ENCODE measurements at regions of chr19 and their contacts with region 1.

Region 1: GRCh38 chr19:32971715-32972540 is at the starts of genes CEP89 and FAAP24:
- DNase-seq: peak; percentile 97 to 98 (median 98)
- ATAC-seq: peak; percentile 99 to 100
- H3K4me3 ChIP-seq: peak within 1 kb of the TSS; percentile 88
- H3K27ac ChIP-seq: peak within 1 kb of the TSS; percentile 10
- H3K4me1 ChIP-seq: peaks cover 4% of the 10 kb centered on the region
- H3K27me3 ChIP-seq: no peaks in the 10 kb centered on the region
- total RNA-seq, gene CEP89: 9.2 to 11.3 (median 9.3) TPM
- total RNA-seq, gene FAAP24: 0.66 to 0.97 (median 0.79) TPM in 3 of 4 donors, not detected in the other

Region 2: DNA sequence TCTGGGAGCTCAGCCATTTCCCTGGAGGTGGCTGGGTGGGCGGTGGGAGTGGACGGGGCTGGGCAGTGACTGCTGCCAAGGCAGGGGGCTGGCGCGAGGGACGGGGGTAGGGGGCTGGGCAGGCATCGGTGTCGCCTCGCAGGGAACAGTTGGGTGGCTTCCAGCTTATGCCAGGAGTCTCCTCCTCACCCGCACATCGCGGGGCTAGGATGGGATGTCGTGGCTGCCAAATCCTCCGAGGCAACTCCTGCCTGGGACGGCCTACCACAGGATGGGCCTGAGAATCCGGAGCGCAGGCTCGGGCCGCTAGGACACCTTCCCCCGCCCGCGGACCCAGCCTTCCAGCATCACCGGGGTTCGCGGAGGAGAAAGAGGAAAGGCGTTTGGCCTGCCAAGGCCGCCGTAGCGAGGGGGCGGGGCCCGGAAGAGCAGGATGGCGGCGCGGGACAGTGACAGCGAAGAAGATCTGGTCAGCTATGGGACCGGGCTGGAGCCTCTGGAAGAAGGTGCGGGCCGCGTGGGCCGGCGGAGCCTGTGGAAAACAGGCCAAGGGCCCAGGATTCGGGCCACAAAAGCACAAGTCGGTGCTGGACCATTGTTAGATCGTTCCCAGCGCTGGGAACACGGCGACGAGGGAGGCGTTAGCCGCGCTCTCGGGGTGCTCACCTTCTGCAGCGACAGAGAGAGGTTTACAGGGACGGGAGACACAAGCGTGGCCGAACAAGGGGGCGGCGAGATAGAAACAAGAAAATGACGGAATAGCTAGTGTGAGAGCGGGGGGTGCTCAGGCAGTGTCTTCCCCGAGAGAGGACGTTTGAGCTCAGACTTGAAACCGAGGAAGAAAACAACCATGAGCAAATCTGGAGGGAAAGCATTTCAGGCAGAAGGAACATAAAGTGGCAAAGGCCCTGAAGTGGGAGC is 109.1 kb after region 1 on chr19 and contains the start of gene GPATCH1:
- intact Hi-C with region 1: loop called in 2 of 4 experiments (anchors 10 kb)
- DNase-seq: peak; percentile 91 to 96 (median 96)
- ATAC-seq: peak; percentile 96 to 98
- H3K4me3 ChIP-seq: peak within 1 kb of the TSS; percentile 76
- H3K27ac ChIP-seq: peak within 1 kb of the TSS; percentile 61
- H3K4me1 ChIP-seq: peaks cover 7% of the 10 kb centered on the region
- H3K27me3 ChIP-seq: no peaks in the 10 kb centered on the region
- total RNA-seq, gene GPATCH1: 4.2 to 7.2 (median 6.3) TPM

Region 3: GRCh38 chr19:33125929-33126388 is 154.0 kb after region 1 on chr19:
- intact Hi-C with region 1: loop called in 2 of 4 experiments (anchors 5 to 10 kb)
- DNase-seq: peak in 1 of 3 donors; percentile 57
- ATAC-seq: peak; percentile 85 to 87
- H3K4me3 ChIP-seq: no peak overlapping the region
- H3K27ac ChIP-seq: no peak overlapping the region
- H3K4me1 ChIP-seq: no peaks in the 10 kb centered on the region
- H3K27me3 ChIP-seq: no peaks in the 10 kb centered on the region

Measured in right cardiac atrium (tissue), 5 donors.